Naive thymus-derived CD4-positive, alpha-beta T cell (primary cell): ENCODE measurements at regions of chr12 and their contacts with region 1.

Region 1: DNA sequence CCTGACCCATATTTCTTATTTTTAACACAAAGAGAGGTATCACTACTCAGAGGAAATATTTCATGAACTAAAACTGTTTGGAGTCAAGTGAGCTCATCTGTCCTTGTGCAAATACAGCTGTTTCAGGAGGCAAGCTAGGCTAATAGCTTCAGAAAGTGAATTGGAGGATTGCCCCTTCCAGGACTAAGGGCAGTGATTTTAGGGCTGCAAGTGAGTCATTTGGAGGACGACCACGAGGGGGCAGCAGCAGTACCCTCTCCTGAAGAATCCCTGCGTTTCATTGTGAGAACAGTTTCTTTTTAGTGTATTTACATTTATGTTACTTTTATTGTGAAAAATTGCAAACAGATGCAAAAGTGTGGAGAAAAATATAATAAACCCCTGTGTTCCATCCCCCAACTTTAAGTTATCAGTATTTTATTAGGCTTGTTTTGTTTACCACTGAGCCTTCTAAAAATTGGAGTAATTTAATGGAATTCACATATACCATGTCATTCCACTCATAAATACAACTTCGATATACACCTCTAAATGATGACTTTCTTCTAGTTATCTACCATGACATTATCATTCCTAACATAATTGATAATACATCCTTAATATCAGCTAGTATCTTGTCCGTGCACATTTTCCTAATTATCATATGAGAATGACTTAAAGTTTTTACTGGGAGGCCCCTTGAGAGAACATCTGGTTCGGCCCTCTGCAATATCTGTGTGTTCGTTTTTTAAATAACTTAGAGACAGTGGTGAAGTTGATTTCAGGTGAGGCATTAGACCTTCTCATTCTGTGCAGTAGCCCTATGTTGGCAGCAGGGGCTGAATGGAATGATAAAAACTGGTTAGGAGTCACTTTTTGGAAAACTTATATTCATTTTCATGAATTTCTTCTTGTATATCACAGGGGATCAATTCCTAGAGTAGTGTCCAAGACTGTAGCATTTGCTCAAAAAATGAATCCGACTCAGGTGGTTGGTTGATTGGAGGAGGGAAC is 13.7 kb downstream of the FOXJ2 start:
- DNase-seq: peak; percentile 60 to 85 (median 76)
- ATAC-seq: peak; percentile 96
- H3K4me3 ChIP-seq: no peak overlapping the region
- H3K4me3 Mint-ChIP-seq: no peak overlapping the region
- H3K27ac ChIP-seq: no peak overlapping the region
- H3K27ac Mint-ChIP-seq: peak overlapping the region in 5 of 9 donors; percentile 57 to 80 (median 63)
- H3K4me1 ChIP-seq: no peaks in the 10 kb centered on the region
- H3K4me1 Mint-ChIP-seq: peaks cover 10 to 19% (median 12%) of the 10 kb centered on the region in 7 donors
- H3K27me3 ChIP-seq: no peaks in the 10 kb centered on the region
- H3K27me3 Mint-ChIP-seq: no peaks in the 10 kb centered on the region

Region 2: DNA sequence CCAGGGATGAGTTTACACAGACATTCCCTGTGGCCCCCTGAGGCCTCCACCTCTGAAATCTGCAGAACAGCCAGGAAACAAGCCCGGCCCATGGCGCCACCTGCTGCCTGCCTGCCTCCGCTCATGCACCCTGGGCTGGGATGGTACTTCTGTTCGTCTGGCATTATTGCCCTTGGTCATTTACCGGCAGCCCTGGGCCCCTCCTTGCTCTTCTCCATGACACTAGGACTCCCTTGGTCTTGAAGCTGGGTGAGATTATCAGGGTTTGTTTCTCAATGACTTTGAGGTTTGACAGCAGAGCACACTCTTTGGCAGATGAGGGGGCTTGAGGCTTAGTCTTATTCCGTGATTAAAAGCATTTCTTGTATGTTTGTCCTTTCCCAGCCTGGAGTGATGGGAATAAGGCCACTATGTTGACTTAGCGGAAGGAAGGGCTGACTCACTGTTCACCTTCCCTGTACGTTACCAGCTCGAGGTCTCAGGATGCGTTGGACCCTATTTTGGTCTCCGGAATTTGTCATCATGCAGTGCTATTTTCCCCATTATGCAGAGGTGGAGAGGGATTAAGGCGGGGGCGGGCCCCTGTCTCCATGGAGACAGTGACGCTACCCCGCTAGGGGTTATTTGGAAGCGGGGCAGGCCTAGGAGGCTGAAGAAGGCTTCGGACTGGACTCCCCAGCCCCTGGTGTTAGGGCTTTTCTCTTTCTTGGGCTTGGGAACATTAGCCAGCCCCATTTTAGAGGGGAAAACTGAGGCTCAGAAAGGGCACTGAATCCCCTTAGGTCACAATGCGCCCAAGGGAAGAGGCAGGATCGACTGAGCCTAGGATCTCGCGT is 857.5 kb before region 1 on chr12:
- CTCF ChIA-PET with region 1: no interaction called
- POLR2A ChIA-PET with region 1: no interaction called
- intact Hi-C with region 1: no loop called
- DNase-seq: peak; percentile 34 to 64 (median 58)
- ATAC-seq: peak; percentile 40
- H3K4me3 ChIP-seq: peak overlapping the region; percentile 89
- H3K4me3 Mint-ChIP-seq: peak overlapping the region; percentile 92 to 99 (median 97)
- H3K27ac ChIP-seq: peak overlapping the region; percentile 92
- H3K27ac Mint-ChIP-seq: peak overlapping the region; percentile 93 to 99 (median 98)
- H3K4me1 ChIP-seq: peaks cover 10 to 28% of the 10 kb centered on the region in 2 donors
- H3K4me1 Mint-ChIP-seq: peaks cover 18 to 48% (median 40%) of the 10 kb centered on the region in 7 donors
- H3K27me3 ChIP-seq: no peaks in the 10 kb centered on the region
- H3K27me3 Mint-ChIP-seq: no peaks in the 10 kb centered on the region

Region 3: DNA sequence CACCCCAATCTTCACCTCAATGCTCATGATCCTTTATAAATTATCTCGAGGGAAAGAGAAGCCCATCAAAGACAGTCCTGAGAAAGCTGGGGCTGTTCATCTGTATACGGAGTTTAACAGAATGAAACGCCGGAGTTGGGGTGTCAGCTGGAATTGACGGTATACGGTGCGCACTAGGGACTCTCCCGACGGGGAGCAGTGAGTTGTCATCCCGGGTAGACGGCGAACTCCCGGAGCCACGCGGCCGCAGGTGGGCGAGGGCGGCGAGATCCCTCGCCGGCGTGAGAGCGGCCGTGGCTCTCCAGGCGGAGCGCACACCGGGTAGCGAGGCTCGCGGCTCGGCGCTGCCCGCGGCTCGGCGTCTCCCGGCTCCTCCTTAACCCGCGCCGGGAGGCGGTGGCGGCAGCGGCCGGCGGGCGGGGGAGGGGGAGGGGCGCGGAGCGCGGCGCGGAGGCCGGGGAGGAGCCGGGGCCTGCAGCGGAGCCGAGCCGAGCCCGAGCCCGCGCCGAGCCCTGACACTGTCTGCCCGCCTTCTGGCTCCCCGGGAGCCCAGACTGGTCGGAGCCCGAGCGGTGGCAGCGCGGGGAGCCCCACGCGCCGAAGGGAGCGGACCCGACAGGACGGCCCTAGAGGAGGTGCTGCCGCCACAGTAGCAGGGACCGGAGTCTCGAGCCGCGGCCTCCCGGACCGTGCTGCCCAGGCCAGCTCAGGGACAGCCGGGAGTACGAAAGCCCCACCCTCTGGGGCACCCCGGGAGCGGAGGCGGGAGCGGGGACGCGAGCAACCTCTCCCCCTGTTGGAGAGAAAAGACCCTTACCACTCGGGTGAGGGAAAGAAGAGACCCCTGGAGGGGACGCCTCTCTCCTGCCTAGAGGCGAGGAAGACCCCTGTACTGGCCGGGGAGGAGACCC is 13.8 kb before region 1 on chr12 and contains the start of gene FOXJ2:
- CTCF ChIA-PET with region 1: interaction called, 12 read pairs
- POLR2A ChIA-PET with region 1: interaction called, 10 read pairs
- intact Hi-C with region 1: loop called in 1 of 2 experiments (anchors 1 kb)
- DNase-seq: peak; percentile 68 to 83 (median 78)
- ATAC-seq: peak; percentile 94
- H3K4me3 ChIP-seq: peak within 1 kb of the TSS; percentile 88
- H3K4me3 Mint-ChIP-seq: peak within 1 kb of the TSS; percentile 71 to 94 (median 91)
- H3K27ac ChIP-seq: peak within 1 kb of the TSS; percentile 100
- H3K27ac Mint-ChIP-seq: peak within 1 kb of the TSS; percentile 77 to 98 (median 94)
- H3K4me1 ChIP-seq: peaks cover 41 to 43% of the 10 kb centered on the region in 2 donors
- H3K4me1 Mint-ChIP-seq: peaks cover 49 to 63% (median 51%) of the 10 kb centered on the region in 7 donors
- H3K27me3 ChIP-seq: no peaks in the 10 kb centered on the region
- H3K27me3 Mint-ChIP-seq: peaks cover 0 to 2% (median 0%) of the 10 kb centered on the region in 5 donors
- total RNA-seq, gene FOXJ2: 19.8 to 30.2 (median 28.9) TPM

Region 4: DNA sequence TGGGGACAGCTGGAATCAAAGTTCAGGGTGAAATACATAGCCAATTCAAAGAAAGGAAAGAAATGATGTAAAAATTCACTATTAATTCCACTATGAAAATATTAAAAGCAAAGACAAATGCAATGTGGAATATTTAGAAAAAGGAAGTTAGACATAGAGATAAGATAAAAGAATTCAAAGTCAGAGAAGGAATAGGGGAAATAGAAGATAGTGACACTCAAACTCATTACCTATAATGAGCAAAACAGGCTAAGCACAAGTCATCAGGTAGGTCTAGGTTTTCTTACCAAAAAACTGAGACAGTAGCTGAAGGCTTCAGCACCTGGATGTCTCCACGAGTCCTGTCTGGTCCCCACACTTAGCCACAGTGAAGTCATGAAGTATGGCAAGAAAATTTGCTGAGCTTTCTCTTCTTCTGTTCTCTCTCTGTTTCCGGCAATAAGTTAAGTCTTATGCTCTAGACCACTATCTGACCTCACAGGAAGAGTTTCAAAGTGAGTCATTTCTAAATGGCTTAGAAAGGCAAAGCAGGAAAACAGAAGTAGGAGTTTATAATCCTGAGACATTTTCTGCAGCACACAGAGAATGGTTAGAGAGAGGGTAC is 19.8 kb after region 1 on chr12 and contains the start of gene C3AR1:
- CTCF ChIA-PET with region 1: interaction called, 7 read pairs
- POLR2A ChIA-PET with region 1: interaction called, 4 read pairs
- intact Hi-C with region 1: loop called in 1 of 2 experiments (anchors 1 kb)
- DNase-seq: peak in 8 of 9 donors; percentile 35 to 70 (median 67)
- ATAC-seq: peak; percentile 98
- H3K4me3 ChIP-seq: peak within 1 kb of the TSS; percentile 5
- H3K4me3 Mint-ChIP-seq: peak within 1 kb of the TSS; percentile 14 to 81 (median 48)
- H3K27ac ChIP-seq: peak within 1 kb of the TSS; percentile 61
- H3K27ac Mint-ChIP-seq: peak within 1 kb of the TSS; percentile 82 to 96 (median 90)
- H3K4me1 ChIP-seq: peaks cover 12 to 17% of the 10 kb centered on the region in 2 donors
- H3K4me1 Mint-ChIP-seq: peaks cover 17 to 33% (median 26%) of the 10 kb centered on the region in 7 donors
- H3K27me3 ChIP-seq: no peaks in the 10 kb centered on the region
- H3K27me3 Mint-ChIP-seq: no peaks in the 10 kb centered on the region
- total RNA-seq, gene C3AR1: 0.66 to 12.7 (median 3.0) TPM